Transverse colon (tissue), 4 donors: ENCODE measurements at regions of chr4 and their contacts with region 1.

Region 1: GRCh38 chr4:5128569-5128968 is 77.3 kb downstream of the STK32B start:
- DNase-seq: no peak
- H3K4me3 ChIP-seq: no peak overlapping the region
- H3K27ac ChIP-seq: no peak overlapping the region
- H3K4me1 ChIP-seq: no peaks in the 10 kb centered on the region
- H3K27me3 ChIP-seq: no peaks in the 10 kb centered on the region
- CTCF ChIP-seq: no peak
- EP300 ChIP-seq: no peak
- POLR2A ChIP-seq: no peak

Region 2: GRCh38 chr4:5086535-5086934 is 42.0 kb before region 1 on chr4:
- in situ Hi-C with region 1: no loop called
- intact Hi-C with region 1: loop called (anchors 2 kb)
- DNase-seq: no peak
- H3K4me3 ChIP-seq: no peak overlapping the region
- H3K27ac ChIP-seq: no peak overlapping the region
- H3K4me1 ChIP-seq: no peaks in the 10 kb centered on the region
- H3K27me3 ChIP-seq: no peaks in the 10 kb centered on the region
- CTCF ChIP-seq: no peak
- EP300 ChIP-seq: no peak
- POLR2A ChIP-seq: no peak